Mammary epithelial cell (primary cell): ENCODE measurements at regions of chr20 and their contacts with region 1.

Region 1: DNA sequence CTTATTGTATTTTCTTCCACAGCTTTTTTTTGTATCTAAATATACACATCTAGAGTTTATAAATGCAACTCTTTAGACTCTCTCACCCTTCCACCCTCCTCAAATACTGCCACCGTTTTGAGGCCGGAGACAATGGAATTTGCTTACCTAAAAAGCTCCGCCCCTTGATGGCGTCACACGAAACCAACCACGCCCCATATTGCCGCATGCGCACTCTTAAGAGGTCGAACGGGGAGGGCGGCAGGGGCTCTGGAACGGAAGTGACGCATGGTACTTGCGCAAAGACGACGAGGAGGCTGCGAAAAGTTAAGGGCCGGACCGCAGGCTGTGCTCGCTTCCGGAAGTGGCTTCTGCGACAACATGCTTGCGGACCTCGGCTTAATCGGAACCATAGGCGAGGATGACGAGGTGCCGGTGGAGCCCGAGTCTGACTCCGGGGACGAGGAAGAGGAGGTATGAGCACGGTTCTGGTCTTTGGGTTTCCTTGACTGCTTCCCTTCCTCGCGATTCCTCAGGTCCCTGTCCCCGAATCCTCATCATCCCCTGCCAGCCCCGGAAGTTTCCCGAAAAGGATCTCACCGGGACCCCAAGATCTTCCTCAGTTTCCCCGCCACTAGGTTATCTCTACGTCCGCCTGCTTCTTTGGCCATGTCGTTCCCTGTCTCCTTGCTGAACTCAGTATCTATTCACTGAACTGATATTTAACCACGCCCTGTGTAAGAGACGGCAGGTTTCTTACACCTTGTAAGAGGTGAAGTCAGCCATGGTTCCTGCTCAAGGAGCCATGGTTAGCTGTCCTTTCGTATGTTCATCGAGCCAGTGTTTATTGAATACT is at the start of gene DDX27:
- DNase-seq: peak; percentile 96
- H3K4me3 ChIP-seq: peak within 1 kb of the TSS; percentile 57 to 93 (median 59)
- H3K27ac ChIP-seq: peak within 1 kb of the TSS; percentile 72
- H3K4me1 ChIP-seq: peaks cover 20% of the 10 kb centered on the region
- H3K27me3 ChIP-seq: no peaks in the 10 kb centered on the region
- CTCF ChIP-seq: no peak
- total RNA-seq, gene DDX27: 39.0 to 44.1 TPM

Region 2: DNA sequence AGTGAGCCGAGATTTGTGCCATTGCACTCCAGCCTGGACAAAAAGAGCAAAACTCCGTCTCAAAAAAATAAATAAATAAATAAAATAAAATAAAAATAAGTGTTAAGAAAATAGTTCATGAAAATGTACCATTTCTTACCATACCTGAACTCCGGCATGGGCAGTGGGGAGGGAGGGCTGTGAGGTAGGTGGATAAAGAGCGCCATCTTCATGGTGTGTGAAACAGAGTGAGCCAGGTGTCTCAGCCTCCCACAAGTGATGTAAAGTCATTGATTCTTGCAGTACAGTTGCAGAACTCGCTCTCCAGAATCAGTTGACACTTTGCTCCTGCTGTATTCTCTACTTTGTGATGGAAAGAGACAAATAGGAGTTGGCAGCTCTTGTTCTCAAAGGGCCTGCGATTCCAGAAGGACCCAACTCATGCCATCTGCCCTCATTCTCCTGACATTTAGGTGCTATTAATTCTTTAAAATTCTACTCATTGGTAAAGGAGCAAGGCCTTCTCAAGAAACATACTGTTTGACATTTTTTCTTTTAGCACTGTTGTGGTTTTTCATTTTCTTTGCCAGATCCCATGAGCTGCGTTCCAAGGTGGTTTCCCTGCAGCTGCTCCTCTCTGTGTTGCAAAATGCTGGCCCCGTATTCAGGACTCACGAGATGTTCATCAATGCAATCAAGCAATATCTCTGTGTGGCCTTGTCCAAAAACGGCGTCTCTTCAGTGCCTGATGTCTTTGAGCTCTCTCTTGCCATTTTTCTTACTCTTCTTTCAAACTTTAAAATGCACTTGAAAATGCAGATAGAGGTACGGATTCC is 248.5 kb before region 1 on chr20:
- CTCF ChIA-PET with region 1: no interaction called
- dilution Hi-C with region 1: no loop called
- in situ Hi-C with region 1: no loop called
- intact Hi-C with region 1: no loop called
- DNase-seq: no peak
- H3K4me3 ChIP-seq: no peak overlapping the region
- H3K27ac ChIP-seq: no peak overlapping the region
- H3K4me1 ChIP-seq: no peaks in the 10 kb centered on the region
- H3K27me3 ChIP-seq: no peaks in the 10 kb centered on the region
- CTCF ChIP-seq: no peak

Region 3: DNA sequence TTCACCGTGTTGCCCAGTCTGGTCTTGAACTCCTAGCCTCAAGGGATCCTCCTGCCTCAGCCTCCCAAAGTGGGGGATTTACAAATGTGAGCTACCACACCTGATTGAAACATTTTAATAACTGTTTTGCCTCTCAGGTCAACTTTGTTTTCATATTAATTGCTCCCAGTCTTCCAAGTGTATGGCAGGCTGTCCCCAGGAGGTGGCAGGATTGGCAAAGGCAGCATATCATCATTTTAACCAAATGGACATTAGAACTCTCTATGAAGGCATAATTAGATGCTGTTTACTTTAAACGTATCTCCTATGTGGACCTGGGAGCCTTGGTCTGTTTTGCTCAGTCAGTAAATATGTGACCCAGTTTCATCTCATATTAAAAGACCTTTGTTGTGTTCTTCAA is 232.4 kb before region 1 on chr20:
- CTCF ChIA-PET with region 1: no interaction called
- dilution Hi-C with region 1: no loop called
- in situ Hi-C with region 1: no loop called
- intact Hi-C with region 1: loop called (anchors 10 kb)
- DNase-seq: no peak
- H3K4me3 ChIP-seq: no peak overlapping the region
- H3K27ac ChIP-seq: no peak overlapping the region
- H3K4me1 ChIP-seq: peaks cover 12% of the 10 kb centered on the region
- H3K27me3 ChIP-seq: no peaks in the 10 kb centered on the region
- CTCF ChIP-seq: peak; percentile 24 to 53

Region 4: DNA sequence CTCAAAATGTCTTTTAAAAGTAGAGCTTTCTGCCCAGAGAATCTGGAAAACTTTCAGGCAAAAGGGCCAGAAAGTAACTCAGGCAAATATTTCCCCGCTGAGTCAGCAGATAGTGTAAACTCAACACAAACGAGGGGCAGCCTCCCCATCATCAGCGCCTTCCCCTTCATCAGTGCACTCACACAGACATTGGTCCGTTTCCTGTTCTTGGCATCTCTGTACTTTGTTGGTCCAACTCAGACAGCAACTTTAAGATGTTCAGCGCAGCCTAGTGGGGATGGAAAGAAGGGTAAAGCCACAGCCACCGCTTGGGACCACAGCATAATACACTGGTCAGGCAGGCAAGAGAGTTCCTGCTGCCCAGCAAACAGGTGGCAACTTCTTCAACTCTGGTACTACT is 103.7 kb before region 1 on chr20:
- CTCF ChIA-PET with region 1: no interaction called
- dilution Hi-C with region 1: loop called (anchors 5 kb)
- in situ Hi-C with region 1: no loop called
- intact Hi-C with region 1: no loop called
- DNase-seq: no peak
- H3K4me3 ChIP-seq: no peak overlapping the region
- H3K27ac ChIP-seq: no peak overlapping the region
- H3K4me1 ChIP-seq: no peaks in the 10 kb centered on the region
- H3K27me3 ChIP-seq: no peaks in the 10 kb centered on the region
- CTCF ChIP-seq: no peak

Region 5: DNA sequence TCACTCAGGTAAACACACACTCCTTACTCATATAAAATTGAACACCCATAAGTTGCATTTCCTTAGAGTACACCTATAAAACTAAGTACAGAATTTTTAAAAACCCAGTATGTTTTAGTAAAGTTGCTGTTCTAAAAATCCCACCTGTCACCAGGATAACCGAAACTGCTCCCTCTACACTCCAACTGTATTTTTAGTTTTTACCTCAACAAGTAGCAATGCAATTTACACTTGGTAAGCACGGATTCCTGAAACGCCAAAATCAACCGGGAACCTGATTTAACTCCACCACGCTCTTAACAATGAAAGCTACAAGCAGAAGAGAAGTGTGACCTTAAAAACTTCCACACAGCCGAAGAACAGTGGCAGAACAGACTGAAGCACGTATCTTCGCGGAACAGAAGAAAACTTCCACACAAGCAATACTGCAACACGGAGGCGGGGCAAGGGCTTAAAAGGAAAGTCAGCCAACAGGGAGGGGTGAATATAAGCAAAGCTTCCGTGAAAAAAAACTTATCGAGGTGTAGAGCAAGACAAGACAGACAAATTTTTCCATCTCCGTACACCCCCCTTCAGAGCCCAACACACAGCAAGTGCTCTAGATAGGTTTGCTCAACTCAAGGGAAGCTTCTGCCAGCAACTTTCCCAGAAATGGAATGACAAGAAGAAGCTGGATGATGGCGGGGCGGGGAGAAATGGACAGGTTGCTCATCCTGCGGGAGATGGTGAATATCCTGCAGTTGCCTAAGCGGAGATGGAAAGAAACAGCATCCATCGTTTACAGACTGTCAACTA is 32.6 kb before region 1 on chr20:
- CTCF ChIA-PET with region 1: interaction called, 3 read pairs
- dilution Hi-C with region 1: no loop called
- in situ Hi-C with region 1: no loop called
- intact Hi-C with region 1: loop called (anchors 1 kb)
- DNase-seq: peak; percentile 66
- H3K4me3 ChIP-seq: peak overlapping the region; percentile 67 to 82 (median 79)
- H3K27ac ChIP-seq: peak overlapping the region; percentile 68
- H3K4me1 ChIP-seq: peaks cover 7% of the 10 kb centered on the region
- H3K27me3 ChIP-seq: no peaks in the 10 kb centered on the region
- CTCF ChIP-seq: no peak

Region 6: GRCh38 chr20:49446808-49447207 is 227.5 kb after region 1 on chr20:
- CTCF ChIA-PET with region 1: no interaction called
- dilution Hi-C with region 1: no loop called
- in situ Hi-C with region 1: no loop called
- intact Hi-C with region 1: no loop called
- DNase-seq: no peak
- H3K4me3 ChIP-seq: no peak overlapping the region
- H3K27ac ChIP-seq: no peak overlapping the region
- H3K4me1 ChIP-seq: no peaks in the 10 kb centered on the region
- H3K27me3 ChIP-seq: no peaks in the 10 kb centered on the region
- CTCF ChIP-seq: peak in 1 of 2 donors; percentile 16